Breast epithelium (tissue), 4 donors: ENCODE measurements at regions of chr10 and their contacts with region 1.

Region 1: DNA sequence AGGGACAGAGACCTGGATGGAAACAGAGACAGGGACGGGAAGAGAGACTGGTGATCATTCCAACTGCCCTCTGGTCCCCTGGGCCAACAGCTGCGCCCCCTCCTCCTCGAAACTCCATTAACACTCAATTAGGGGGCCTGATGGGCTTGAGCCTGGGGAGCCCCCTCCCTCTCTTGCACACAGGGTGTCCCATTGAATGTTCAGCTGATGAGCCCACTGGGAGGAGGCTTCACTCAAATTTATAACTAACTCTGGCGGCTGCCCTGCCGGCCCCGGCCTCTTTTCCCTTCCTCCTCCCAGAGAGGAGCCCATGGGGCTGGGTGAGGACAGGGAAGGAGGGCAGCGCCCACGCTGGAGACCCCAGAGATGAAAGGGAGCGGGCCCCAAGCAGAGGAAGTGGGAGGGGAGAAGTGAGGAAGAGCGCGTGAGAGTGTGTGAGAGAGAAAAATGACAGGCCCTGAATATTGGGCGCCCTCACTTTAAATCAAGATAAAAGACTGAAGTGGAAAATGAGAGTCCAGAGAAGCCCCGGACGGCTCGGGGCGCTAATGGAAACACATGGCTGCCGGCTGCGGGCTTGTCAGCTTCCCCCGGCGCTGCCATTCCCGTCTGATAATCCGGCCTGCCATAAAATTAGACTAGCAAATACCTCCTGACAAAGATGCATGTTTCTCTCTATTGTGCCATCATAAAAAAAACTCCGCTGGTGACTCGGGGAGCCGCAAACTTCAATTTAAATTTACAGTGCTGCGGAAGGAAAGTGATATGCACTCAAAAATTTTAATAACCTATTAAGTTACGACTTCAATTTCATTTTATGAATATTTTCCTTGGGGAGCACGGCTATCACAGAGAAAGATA is 58.0 kb upstream of the PAX2 start:
- DNase-seq: no peak
- H3K4me3 ChIP-seq: no peak overlapping the region
- H3K27ac ChIP-seq: no peak overlapping the region
- H3K4me1 ChIP-seq: no peaks in the 10 kb centered on the region
- H3K27me3 ChIP-seq: peaks cover 0 to 79% of the 10 kb centered on the region in 2 donors
- CTCF ChIP-seq: no peak
- POLR2A ChIP-seq: no peak

Region 2: GRCh38 chr10:100615908-100616307 is 71.5 kb before region 1 on chr10:
- intact Hi-C with region 1: loop called (anchors 2 kb)
- DNase-seq: no peak
- H3K4me3 ChIP-seq: no peak overlapping the region
- H3K27ac ChIP-seq: no peak overlapping the region
- H3K4me1 ChIP-seq: no peaks in the 10 kb centered on the region
- H3K27me3 ChIP-seq: peaks cover 0 to 57% of the 10 kb centered on the region in 2 donors
- CTCF ChIP-seq: no peak
- POLR2A ChIP-seq: no peak